ENCODE measurements at regions of chr12 and their contacts with region 1.

Region 1: GRCh38 chr12:82619644-82620043 is 67.1 kb upstream of the TMTC2 start:
- DNase-seq: no peak
- H3K4me3 Mint-ChIP-seq: no peak overlapping the region
- H3K27ac Mint-ChIP-seq: no peak overlapping the region
- H3K4me1 Mint-ChIP-seq: no peaks in the 10 kb centered on the region
- H3K27me3 Mint-ChIP-seq: no peaks in the 10 kb centered on the region
- CTCF ChIP-seq: no peak

Region 2: GRCh38 chr12:81835783-81836182 is 783.9 kb before region 1 on chr12:
- CTCF ChIA-PET with region 1: no interaction called
- intact Hi-C with region 1: loop called (anchors 5 kb)
- DNase-seq: no peak
- H3K4me3 Mint-ChIP-seq: no peak overlapping the region
- H3K27ac Mint-ChIP-seq: no peak overlapping the region
- H3K4me1 Mint-ChIP-seq: no peaks in the 10 kb centered on the region
- H3K27me3 Mint-ChIP-seq: no peaks in the 10 kb centered on the region
- CTCF ChIP-seq: no peak

Region 3: GRCh38 chr12:82461851-82462250 is 157.8 kb before region 1 on chr12:
- CTCF ChIA-PET with region 1: no interaction called
- intact Hi-C with region 1: no loop called
- DNase-seq: no peak
- H3K4me3 Mint-ChIP-seq: no peak overlapping the region
- H3K27ac Mint-ChIP-seq: no peak overlapping the region
- H3K4me1 Mint-ChIP-seq: peaks cover 27% of the 10 kb centered on the region
- H3K27me3 Mint-ChIP-seq: no peaks in the 10 kb centered on the region
- CTCF ChIP-seq: no peak

Measured in Calu3 (cell line).